Right lobe of liver (tissue), 6 donors: ENCODE measurements at regions of chr11 and their contacts with region 1.

Region 1: DNA sequence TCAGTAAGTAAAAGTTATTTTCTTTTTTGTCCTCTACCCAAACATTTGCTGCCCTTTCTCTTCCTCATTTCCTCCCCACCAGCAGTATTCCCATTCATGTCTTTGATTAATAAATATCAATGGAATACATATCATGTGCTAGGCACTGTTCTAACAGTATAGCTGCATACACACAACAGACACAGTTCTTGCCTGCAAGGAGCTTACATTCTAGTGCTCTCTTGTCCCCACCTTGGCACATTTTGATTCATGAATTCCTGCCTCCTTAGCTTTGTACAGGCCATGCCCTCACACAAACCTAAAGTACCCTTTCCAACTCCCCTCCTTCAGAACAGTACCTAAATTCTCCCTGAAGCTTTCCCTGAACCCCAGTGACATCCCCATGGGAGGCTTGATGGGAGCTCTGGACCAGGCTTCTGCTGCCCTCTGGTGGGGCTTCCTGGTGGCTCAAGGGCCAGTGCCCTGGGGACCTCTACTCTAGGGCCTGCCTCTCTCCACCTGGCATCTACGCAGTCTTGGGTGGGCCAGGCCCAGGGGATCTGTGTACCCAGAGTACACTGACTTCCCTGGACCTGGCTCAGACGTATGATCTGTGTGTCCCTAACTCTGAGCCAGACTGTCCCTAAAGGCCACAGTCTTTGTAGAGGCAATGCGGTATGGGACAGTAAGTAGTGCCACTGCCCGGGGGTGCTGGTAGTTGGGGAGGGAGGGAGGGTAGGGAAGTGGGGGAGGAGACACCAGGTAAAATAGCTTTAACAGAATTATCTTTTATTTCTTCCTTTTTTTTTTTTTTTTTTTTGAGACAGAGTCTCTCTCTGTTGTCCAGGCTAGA is 14.1 kb downstream of the RPS13 start:
- DNase-seq: peak; percentile 68 to 74 (median 70)
- ATAC-seq: peak; percentile 96 to 99 (median 99)
- H3K4me3 ChIP-seq: no peak overlapping the region
- H3K27ac ChIP-seq: no peak overlapping the region
- H3K4me1 ChIP-seq: no peaks in the 10 kb centered on the region
- H3K27me3 ChIP-seq: no peaks in the 10 kb centered on the region
- CTCF ChIP-seq: peak; percentile 83 to 89 (median 85)
- POLR2A ChIP-seq: no peak

Region 2: GRCh38 chr11:16945671-16946469 is 117.5 kb before region 1 on chr11:
- intact Hi-C with region 1: loop called (anchors 5 to 10 kb)
- DNase-seq: peak; percentile 57 to 73 (median 66)
- ATAC-seq: peak; percentile 96 to 99 (median 98)
- H3K4me3 ChIP-seq: no peak overlapping the region
- H3K27ac ChIP-seq: no peak overlapping the region
- H3K4me1 ChIP-seq: no peaks in the 10 kb centered on the region
- H3K27me3 ChIP-seq: no peaks in the 10 kb centered on the region
- CTCF ChIP-seq: peak; percentile 70 to 78 (median 74)
- POLR2A ChIP-seq: no peak

Region 3: GRCh38 chr11:17405232-17406005 is 342.0 kb after region 1 on chr11:
- intact Hi-C with region 1: no loop called
- DNase-seq: peak; percentile 91 to 96 (median 94)
- ATAC-seq: peak; percentile 97 to 99 (median 98)
- H3K4me3 ChIP-seq: no peak overlapping the region
- H3K27ac ChIP-seq: peak overlapping the region; percentile 34 to 77 (median 72)
- H3K4me1 ChIP-seq: peaks cover 0 to 20% (median 7%) of the 10 kb centered on the region in 4 donors
- H3K27me3 ChIP-seq: no peaks in the 10 kb centered on the region
- CTCF ChIP-seq: peak; percentile 31 to 38 (median 34)
- POLR2A ChIP-seq: peak; percentile 20